Gastrocnemius medialis (tissue), 4 donors: ENCODE measurements at regions of chr10 and their contacts with region 1.

Region 1: GRCh38 chr10:23493711-23494110 is 54.8 kb downstream of the OTUD1 start:
- DNase-seq: no peak
- ATAC-seq: no peak
- H3K4me3 ChIP-seq: no peak overlapping the region
- H3K27ac ChIP-seq: no peak overlapping the region
- H3K4me1 ChIP-seq: no peaks in the 10 kb centered on the region
- H3K27me3 ChIP-seq: no peaks in the 10 kb centered on the region
- CTCF ChIP-seq: no peak
- POLR2A ChIP-seq: no peak

Region 2: GRCh38 chr10:22655311-22655981 is 838.3 kb before region 1 on chr10:
- in situ Hi-C with region 1: no loop called
- intact Hi-C with region 1: no loop called
- DNase-seq: no peak
- ATAC-seq: no peak
- H3K4me3 ChIP-seq: no peak overlapping the region
- H3K27ac ChIP-seq: no peak overlapping the region
- H3K4me1 ChIP-seq: peaks cover 0 to 4% of the 10 kb centered on the region in 2 donors
- H3K27me3 ChIP-seq: no peaks in the 10 kb centered on the region
- CTCF ChIP-seq: no peak
- POLR2A ChIP-seq: no peak

Region 3: GRCh38 chr10:23461557-23461956 is 32.2 kb before region 1 on chr10:
- in situ Hi-C with region 1: no loop called
- intact Hi-C with region 1: loop called (anchors 1 kb)
- DNase-seq: no peak
- ATAC-seq: peak in 1 of 2 donors; percentile 63
- H3K4me3 ChIP-seq: no peak overlapping the region
- H3K27ac ChIP-seq: peak overlapping the region in 2 of 4 donors; percentile 19 to 20
- H3K4me1 ChIP-seq: peaks cover 11 to 20% of the 10 kb centered on the region in 2 donors
- H3K27me3 ChIP-seq: no peaks in the 10 kb centered on the region
- CTCF ChIP-seq: no peak
- POLR2A ChIP-seq: no peak

Region 4: DNA sequence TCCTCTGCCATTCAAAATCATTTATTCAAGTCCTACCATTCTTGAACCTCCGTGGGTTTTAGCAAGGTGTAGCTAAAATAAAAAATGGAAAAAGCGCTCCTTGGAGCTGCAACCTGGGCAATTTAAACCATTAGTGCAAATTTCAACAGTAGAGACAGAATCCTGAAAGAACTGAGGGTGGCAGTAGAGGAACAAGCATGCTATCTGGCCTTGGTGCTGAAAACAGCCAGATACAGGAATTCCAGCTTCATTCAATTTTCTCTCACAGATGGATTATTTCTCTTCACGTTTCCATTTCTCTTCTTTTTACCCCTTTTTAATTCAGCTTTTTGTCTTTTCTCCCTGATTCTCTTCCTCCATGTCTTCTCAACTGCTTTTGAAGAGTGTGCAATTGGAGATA is 22.8 kb after region 1 on chr10:
- in situ Hi-C with region 1: no loop called
- intact Hi-C with region 1: no loop called
- DNase-seq: no peak
- ATAC-seq: no peak
- H3K4me3 ChIP-seq: no peak overlapping the region
- H3K27ac ChIP-seq: no peak overlapping the region
- H3K4me1 ChIP-seq: no peaks in the 10 kb centered on the region
- H3K27me3 ChIP-seq: peaks cover 0 to 3% (median 0%) of the 10 kb centered on the region in 3 donors
- CTCF ChIP-seq: no peak
- POLR2A ChIP-seq: no peak